K562 (cell line): ENCODE measurements at regions of chr4 and their contacts with region 1.

Region 1: GRCh38 chr4:80072744-80073472 is at the start of gene ANTXR2:
- DNase-seq: peak; percentile 82 to 90 (median 85)
- ATAC-seq: peak; percentile 93
- H3K4me3 ChIP-seq: peak within 1 kb of the TSS; percentile 89
- H3K27ac ChIP-seq: peak within 1 kb of the TSS; percentile 87
- H3K4me1 ChIP-seq: peaks cover 12 to 27% of the 10 kb centered on the region in 2 experiments; a peak in 4 of 5 replicates
- H3K27me3 ChIP-seq: no peaks in the 10 kb centered on the region
- CTCF ChIP-seq: no peak
- EP300 ChIP-seq: peak; percentile 38; the same call in 1 of the 2 replicates
- POLR2A ChIP-seq: peak; percentile 77
- RAD21 ChIP-seq: peak in 1 of 2 experiments; percentile 27; a peak in 3 of 4 replicates
- polyA plus RNA-seq, gene ANTXR2: 10.1 to 26.6 TPM

Region 2: DNA sequence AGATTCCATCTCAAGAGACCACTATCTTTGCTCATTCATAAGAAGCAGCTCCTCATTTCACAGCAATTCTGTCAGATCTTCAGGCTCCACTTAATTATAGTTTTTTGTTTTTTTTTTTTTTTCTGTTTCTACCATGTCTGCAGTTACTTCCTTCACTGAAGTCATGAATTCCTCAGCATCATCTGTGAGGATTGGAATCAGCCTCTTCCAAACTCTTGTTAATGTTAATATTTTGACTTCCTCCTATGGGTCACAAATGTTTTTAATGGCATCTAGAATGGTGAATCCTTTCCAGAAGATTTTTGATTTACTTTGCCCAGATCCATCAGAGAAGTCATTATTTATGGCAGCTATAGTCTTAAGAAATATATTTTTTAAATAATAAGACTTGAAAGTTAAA is 1243.6 kb before region 1 on chr4:
- CTCF ChIA-PET with region 1: no interaction called
- POLR2A ChIA-PET with region 1: no interaction called
- in situ Hi-C with region 1: no loop called
- intact Hi-C with region 1: no loop called
- DNase-seq: no peak
- ATAC-seq: no peak
- H3K4me3 ChIP-seq: no peak overlapping the region
- H3K27ac ChIP-seq: no peak overlapping the region
- H3K4me1 ChIP-seq: no peaks in the 10 kb centered on the region
- H3K27me3 ChIP-seq: no peaks in the 10 kb centered on the region
- CTCF ChIP-seq: no peak
- EP300 ChIP-seq: no peak
- POLR2A ChIP-seq: no peak
- RAD21 ChIP-seq: no peak

Region 3: DNA sequence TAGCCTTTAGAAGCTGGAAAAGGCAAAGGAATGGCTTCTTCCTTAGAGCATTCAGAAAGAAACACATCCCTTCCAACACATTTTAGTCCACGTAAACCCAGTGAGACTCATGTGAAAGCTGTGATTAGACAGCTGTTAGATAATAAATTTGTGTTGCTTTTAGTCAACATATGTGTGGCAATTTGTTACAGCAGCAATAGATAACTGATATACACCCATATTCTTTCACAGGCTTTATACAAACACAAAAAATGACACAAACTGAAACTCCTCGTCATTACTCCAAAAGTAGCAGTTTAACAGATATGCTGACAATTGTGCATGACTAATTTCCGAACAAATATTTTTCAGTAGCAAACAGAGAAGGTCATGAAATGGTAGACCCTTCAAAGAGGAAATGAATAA is 65.2 kb before region 1 on chr4:
- CTCF ChIA-PET with region 1: no interaction called
- POLR2A ChIA-PET with region 1: no interaction called
- in situ Hi-C with region 1: no loop called
- intact Hi-C with region 1: loop called (anchors 2 kb)
- DNase-seq: peak in 2 of 4 experiments; percentile 13 to 27
- ATAC-seq: peak; percentile 13; the same call in 2 of the 3 replicates
- H3K4me3 ChIP-seq: no peak overlapping the region
- H3K27ac ChIP-seq: peak overlapping the region; percentile 92
- H3K4me1 ChIP-seq: peaks cover 0 to 39% of the 10 kb centered on the region in 2 experiments; a peak in 3 of 5 replicates
- H3K27me3 ChIP-seq: no peaks in the 10 kb centered on the region
- CTCF ChIP-seq: no peak
- EP300 ChIP-seq: peak; percentile 11; the same call in 1 of the 2 replicates
- POLR2A ChIP-seq: no peak
- RAD21 ChIP-seq: no peak

Region 4: GRCh38 chr4:80058740-80059139 is 14.2 kb before region 1 on chr4:
- CTCF ChIA-PET with region 1: no interaction called
- POLR2A ChIA-PET with region 1: interaction called, 10 read pairs
- in situ Hi-C with region 1: no loop called
- intact Hi-C with region 1: no loop called
- DNase-seq: peak in 2 of 4 experiments; percentile 26 to 63
- ATAC-seq: peak; percentile 77
- H3K4me3 ChIP-seq: no peak overlapping the region
- H3K27ac ChIP-seq: peak overlapping the region; percentile 22; the same call in 1 of the 3 replicates
- H3K4me1 ChIP-seq: peaks cover 4% of the 10 kb centered on the region in 2 experiments; a peak in 2 of 5 replicates
- H3K27me3 ChIP-seq: no peaks in the 10 kb centered on the region
- CTCF ChIP-seq: no peak
- EP300 ChIP-seq: no peak
- POLR2A ChIP-seq: no peak
- RAD21 ChIP-seq: no peak

Region 5: DNA sequence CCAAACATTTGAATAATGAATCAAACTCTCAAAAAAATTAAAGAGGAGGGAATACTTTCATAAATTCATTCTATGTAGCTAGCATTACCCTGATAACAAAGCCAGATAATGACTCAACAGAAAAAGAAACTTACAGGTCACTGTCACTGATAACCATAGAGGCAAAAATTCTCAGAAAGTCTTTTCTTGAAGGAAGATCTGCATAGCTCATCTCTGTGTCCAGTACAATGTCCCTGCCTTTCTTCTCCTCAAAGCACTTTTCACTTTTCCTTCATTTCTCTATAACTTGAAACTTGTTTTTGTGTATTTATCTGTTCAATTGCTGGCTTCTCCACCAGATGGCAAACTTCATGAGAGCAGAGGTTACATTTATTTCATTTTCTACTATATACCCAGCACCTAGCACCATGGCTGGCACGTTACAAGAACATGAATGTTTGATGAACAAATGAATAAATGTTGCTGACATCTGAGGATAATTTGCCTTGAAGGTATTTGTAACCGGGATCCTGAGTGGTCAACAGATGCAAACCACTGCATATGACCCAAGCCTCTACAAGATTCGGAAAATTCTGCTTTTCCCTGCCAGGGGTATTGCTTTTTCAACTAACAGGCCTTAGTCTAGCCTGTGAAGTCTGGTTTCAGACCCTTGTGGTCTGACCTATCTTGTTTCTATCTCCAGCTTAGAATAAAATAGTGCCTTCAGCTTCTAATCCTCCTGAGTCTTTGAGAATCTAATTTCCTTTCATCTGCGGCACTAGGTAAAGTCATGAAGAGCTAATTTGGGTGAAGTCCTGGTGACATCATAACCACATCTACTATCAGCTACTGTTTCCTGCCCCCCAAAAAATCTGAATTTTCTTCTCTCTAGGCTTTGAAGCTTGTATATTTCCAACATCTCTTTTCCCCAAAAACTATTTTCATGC is 52.6 kb after region 1 on chr4:
- CTCF ChIA-PET with region 1: no interaction called
- POLR2A ChIA-PET with region 1: interaction called, 4 read pairs
- in situ Hi-C with region 1: no loop called
- intact Hi-C with region 1: loop called (anchors 2 kb)
- DNase-seq: peak; percentile 28 to 76 (median 44)
- ATAC-seq: peak; percentile 74
- H3K4me3 ChIP-seq: peak overlapping the region; percentile 36
- H3K27ac ChIP-seq: peak overlapping the region; percentile 90
- H3K4me1 ChIP-seq: peaks cover 0 to 37% of the 10 kb centered on the region in 2 experiments; a peak in 4 of 5 replicates
- H3K27me3 ChIP-seq: no peaks in the 10 kb centered on the region
- CTCF ChIP-seq: peak; percentile 37 to 59 (median 50); a peak in 5 of 6 replicates
- EP300 ChIP-seq: peak; percentile 85; the same call in 1 of the 2 replicates
- POLR2A ChIP-seq: no peak
- RAD21 ChIP-seq: peak; percentile 52 to 57; a peak in 3 of 4 replicates

Region 6: GRCh38 chr4:80142394-80143306 is 69.7 kb after region 1 on chr4:
- CTCF ChIA-PET with region 1: no interaction called
- POLR2A ChIA-PET with region 1: no interaction called
- in situ Hi-C with region 1: no loop called
- intact Hi-C with region 1: loop called (anchors 1 kb)
- DNase-seq: peak in 3 of 4 experiments; percentile 38 to 76 (median 47)
- ATAC-seq: peak; percentile 51
- H3K4me3 ChIP-seq: no peak overlapping the region
- H3K27ac ChIP-seq: peak overlapping the region; percentile 75; the same call in 2 of the 3 replicates
- H3K4me1 ChIP-seq: peaks cover 8 to 66% of the 10 kb centered on the region in 2 experiments
- H3K27me3 ChIP-seq: no peaks in the 10 kb centered on the region
- CTCF ChIP-seq: no peak
- EP300 ChIP-seq: no peak; the same call in 1 of the 2 replicates
- POLR2A ChIP-seq: no peak
- RAD21 ChIP-seq: no peak